ENCODE measurements at regions of chr1 and their contacts with region 1.

Region 1: GRCh38 chr1:26787706-26788514 is at the start of gene PIGV:
- DNase-seq: peak; percentile 86 to 92
- ATAC-seq: peak; percentile 81
- total RNA-seq, gene PIGV: 17.1 to 18.6 TPM

Region 2: GRCh38 chr1:26602378-26602959 is 185.4 kb before region 1 on chr1:
- intact Hi-C with region 1: loop called (anchors 5 kb)
- DNase-seq: peak in 1 of 2 donors; percentile 12
- ATAC-seq: peak; percentile 72

Region 3: GRCh38 chr1:26666855-26667254 is 121.1 kb before region 1 on chr1:
- intact Hi-C with region 1: no loop called
- DNase-seq: no peak
- ATAC-seq: no peak

Region 4: GRCh38 chr1:26692793-26693490 is 95.0 kb before region 1 on chr1:
- intact Hi-C with region 1: loop called in 1 of 2 experiments (anchors 5 kb)
- DNase-seq: peak; percentile 93 to 97
- ATAC-seq: peak; percentile 62